Esophagus squamous epithelium (tissue), 5 donors: ENCODE measurements at regions of chr4 and their contacts with region 1.

Region 1: DNA sequence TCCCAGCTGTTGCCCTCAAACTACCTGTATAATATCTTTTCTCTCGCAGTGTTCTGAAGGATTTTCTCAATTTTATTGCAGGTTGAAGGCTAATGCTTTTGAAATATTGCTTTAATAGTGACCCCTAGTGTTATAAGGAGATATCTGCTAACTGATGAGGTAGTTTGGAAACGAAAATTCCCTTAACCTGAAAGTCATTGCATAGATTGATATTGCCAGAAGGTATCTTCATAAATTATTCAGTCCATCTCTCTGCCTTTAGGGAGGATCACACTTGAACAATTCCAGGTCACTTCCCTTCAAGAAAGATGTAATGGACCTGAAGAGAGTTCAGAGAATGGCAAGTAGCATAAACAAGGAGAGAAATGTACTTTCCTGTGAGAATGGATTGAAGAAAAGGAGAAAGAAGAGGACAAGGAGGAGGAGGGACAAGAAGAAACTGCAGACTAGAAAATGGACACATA is 44.1 kb downstream of the TIGD4 start:
- DNase-seq: no peak
- H3K4me3 ChIP-seq: no peak overlapping the region
- H3K27ac ChIP-seq: peak overlapping the region in 1 of 4 donors; percentile 31
- H3K4me1 ChIP-seq: peaks cover 0 to 12% (median 0%) of the 10 kb centered on the region in 3 donors
- H3K27me3 ChIP-seq: no peaks in the 10 kb centered on the region
- CTCF ChIP-seq: peak; percentile 46 to 81 (median 62)
- POLR2A ChIP-seq: no peak

Region 2: GRCh38 chr4:152663203-152664066 is 72.0 kb before region 1 on chr4:
- intact Hi-C with region 1: loop called (anchors 10 kb)
- DNase-seq: no peak
- H3K4me3 ChIP-seq: no peak overlapping the region
- H3K27ac ChIP-seq: peak overlapping the region in 3 of 4 donors; percentile 11 to 31 (median 16)
- H3K4me1 ChIP-seq: peaks cover 0 to 15% (median 0%) of the 10 kb centered on the region in 3 donors
- H3K27me3 ChIP-seq: no peaks in the 10 kb centered on the region
- CTCF ChIP-seq: no peak
- POLR2A ChIP-seq: no peak